Panc1 (cell line): ENCODE measurements at regions of chr13 and their contacts with region 1.

Region 1: DNA sequence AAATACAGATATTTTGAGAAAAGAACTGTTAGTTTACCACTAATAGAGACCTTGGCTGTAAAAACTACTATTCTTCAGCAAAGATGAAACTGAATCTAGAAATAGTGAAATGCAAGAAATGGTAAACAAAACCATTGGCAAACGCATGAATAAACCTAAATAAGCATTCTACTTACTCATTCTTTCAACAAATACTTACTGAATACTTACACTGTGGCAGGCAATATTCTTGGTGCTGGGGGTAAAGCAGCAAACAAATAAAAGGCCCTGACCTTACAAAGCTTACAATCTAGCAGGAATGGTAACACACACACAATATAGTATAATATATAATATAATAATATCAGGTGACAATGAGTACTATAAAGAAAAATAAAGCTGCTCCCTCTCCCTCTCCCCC is 38.7 kb downstream of the KATNAL1 start:
- DNase-seq: no peak
- ATAC-seq: no peak
- H3K4me3 ChIP-seq: no peak overlapping the region
- H3K27ac ChIP-seq: no peak overlapping the region
- H3K4me1 ChIP-seq: no peaks in the 10 kb centered on the region
- H3K27me3 ChIP-seq: no peaks in the 10 kb centered on the region
- CTCF ChIP-seq: no peak

Region 2: DNA sequence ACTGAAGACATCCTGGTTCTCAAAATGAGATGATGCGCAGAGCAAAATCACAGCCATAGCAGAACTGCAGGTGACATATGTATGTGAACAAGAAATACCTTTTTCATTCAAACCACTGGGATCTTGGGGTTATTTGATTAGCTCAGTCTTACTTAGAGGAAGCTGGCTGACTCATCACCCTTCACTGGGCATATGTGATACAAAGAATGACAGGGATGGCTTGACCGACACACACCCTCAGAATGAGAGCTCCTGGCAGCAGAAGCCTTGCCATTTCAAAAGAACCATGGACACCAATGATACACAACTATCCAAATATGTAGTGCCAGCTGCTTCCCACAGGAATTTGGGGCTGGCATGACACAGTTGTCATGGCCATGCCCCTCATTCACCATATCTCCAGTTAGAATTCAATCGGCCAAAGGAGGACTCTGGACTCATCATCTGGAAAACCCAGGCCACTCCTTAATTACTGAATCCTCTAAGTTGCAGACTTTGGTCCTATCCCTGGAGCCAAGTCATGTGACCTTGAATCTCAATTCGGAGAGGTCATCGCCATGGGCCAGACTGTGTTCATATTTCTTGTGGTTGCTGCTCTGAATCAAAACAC is 77.1 kb before region 1 on chr13:
- CTCF ChIA-PET with region 1: no interaction called
- POLR2A ChIA-PET with region 1: interaction called, 16 read pairs
- in situ Hi-C with region 1: no loop called
- intact Hi-C with region 1: no loop called
- DNase-seq: no peak
- ATAC-seq: no peak
- H3K4me3 ChIP-seq: no peak overlapping the region
- H3K27ac ChIP-seq: no peak overlapping the region
- H3K4me1 ChIP-seq: no peaks in the 10 kb centered on the region
- H3K27me3 ChIP-seq: no peaks in the 10 kb centered on the region
- CTCF ChIP-seq: no peak